Transverse colon (tissue), 4 donors: ENCODE measurements at regions of chr10 and their contacts with region 1.

Region 1: DNA sequence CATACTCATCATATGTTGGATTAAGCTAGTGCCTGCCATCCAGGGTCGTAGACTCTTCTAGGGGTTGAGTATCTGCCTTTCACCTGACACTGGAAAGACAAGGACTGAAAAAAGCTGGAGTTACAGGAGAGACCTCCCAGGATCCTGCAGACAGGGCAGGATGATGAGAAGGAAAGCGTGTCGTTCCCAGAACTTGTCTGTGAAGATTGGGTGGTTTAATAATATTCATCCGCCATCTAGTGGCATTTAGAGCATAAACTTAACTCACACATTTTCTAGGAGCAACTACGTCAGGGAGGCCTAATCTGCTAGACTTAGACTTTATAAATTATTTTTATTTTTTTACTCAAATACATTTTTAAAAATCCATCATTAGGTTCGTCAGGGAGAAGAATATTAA is 59.6 kb downstream of the ADRB1 start:
- DNase-seq: no peak
- H3K4me3 ChIP-seq: no peak overlapping the region
- H3K27ac ChIP-seq: no peak overlapping the region
- H3K4me1 ChIP-seq: peaks cover 0 to 15% (median 10%) of the 10 kb centered on the region in 4 donors
- H3K27me3 ChIP-seq: no peaks in the 10 kb centered on the region
- CTCF ChIP-seq: peak; percentile 46 to 74 (median 58)
- EP300 ChIP-seq: no peak
- POLR2A ChIP-seq: no peak

Region 2: GRCh38 chr10:113027574-113028455 is 1075.5 kb before region 1 on chr10:
- in situ Hi-C with region 1: no loop called
- intact Hi-C with region 1: no loop called
- DNase-seq: no peak
- H3K4me3 ChIP-seq: no peak overlapping the region
- H3K27ac ChIP-seq: peak overlapping the region in 3 of 4 donors; percentile 23 to 30 (median 29)
- H3K4me1 ChIP-seq: peaks cover 10 to 37% (median 32%) of the 10 kb centered on the region in 4 donors
- H3K27me3 ChIP-seq: no peaks in the 10 kb centered on the region
- CTCF ChIP-seq: no peak
- EP300 ChIP-seq: no peak
- POLR2A ChIP-seq: no peak

Region 3: DNA sequence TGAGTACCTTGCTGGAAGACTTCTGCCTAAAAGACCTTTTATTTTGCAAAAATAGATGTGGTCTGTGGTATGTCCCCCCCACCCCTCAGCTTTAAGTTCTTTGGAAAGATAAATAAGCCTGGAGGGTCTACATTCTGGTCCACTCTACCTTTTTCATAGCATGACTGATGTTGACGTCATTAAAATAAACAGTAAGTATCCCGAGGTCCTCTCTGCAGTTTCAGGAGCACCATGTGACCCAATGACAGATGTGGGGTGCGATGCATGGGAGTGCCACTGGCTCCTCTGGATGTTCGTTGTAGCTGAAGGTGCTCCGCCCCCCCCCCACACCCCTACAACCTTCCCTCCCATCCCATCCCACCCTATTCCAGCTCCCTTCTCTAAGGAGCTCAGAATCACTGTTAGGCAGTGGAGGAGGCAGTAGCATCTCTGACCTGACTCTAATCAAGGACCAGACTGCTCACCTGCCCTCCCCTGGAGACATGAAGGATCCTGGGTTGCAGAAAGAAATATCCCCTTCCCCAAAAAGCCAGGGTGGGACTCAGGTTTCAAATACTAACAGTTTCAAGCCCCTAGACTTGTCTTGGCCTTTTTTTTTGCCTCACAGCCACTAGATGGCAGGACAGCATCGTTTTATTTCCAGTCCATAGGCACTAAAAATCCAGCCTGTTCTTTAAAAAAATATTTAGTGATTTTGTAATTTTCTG is 398.5 kb before region 1 on chr10:
- in situ Hi-C with region 1: loop called (anchors 10 kb)
- intact Hi-C with region 1: no loop called
- DNase-seq: no peak
- H3K4me3 ChIP-seq: no peak overlapping the region
- H3K27ac ChIP-seq: no peak overlapping the region
- H3K4me1 ChIP-seq: peaks cover 0 to 19% (median 3%) of the 10 kb centered on the region in 4 donors
- H3K27me3 ChIP-seq: no peaks in the 10 kb centered on the region
- CTCF ChIP-seq: peak; percentile 62 to 68 (median 64)
- EP300 ChIP-seq: no peak
- POLR2A ChIP-seq: no peak

Region 4: DNA sequence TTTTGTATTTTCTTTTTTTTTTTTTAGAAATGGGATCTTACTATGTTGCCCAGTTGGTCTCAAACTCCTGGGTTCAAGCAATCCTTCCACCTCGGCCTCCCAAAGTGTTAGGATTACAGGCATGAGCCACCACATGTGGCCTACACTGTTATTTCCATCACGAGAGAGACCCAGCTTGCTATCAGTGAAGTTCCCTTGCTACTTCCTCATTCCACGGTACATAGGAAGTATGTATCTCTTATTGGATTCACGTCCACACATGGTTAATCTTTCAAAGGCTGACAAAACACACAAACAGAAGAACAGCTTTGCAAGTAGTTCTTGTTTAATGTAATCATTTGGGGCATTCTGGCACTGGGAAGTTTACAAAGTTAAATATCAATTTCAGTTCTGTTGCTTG is 300.3 kb before region 1 on chr10:
- in situ Hi-C with region 1: loop called (anchors 5 to 25 kb)
- intact Hi-C with region 1: loop called (anchors 5 kb)
- DNase-seq: no peak
- H3K4me3 ChIP-seq: no peak overlapping the region
- H3K27ac ChIP-seq: no peak overlapping the region
- H3K4me1 ChIP-seq: peaks cover 0 to 4% (median 0%) of the 10 kb centered on the region in 4 donors
- H3K27me3 ChIP-seq: no peaks in the 10 kb centered on the region
- CTCF ChIP-seq: no peak
- EP300 ChIP-seq: no peak
- POLR2A ChIP-seq: no peak

Region 5: DNA sequence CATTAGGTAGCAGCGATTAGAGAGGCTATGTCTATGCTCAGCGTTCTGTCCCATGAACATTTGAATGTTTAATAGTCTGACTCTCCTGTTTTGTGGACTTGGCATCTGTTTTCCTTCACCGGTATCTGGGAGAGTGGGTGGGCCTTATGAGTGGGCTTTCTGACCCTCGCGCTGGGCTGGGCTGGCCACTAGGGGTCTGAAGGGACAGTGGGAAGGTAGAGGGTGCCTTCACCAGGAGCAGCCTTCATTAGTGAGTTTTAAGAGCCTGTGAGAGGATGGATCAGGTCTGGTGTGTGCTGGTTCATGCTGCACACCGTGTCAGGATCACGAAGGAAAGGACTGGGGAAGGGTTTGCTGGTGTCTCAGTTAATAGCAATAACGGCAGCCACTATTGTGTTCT is 282.8 kb before region 1 on chr10:
- in situ Hi-C with region 1: loop called in 1 of 4 experiments (anchors 25 kb)
- intact Hi-C with region 1: no loop called
- DNase-seq: no peak
- H3K4me3 ChIP-seq: no peak overlapping the region
- H3K27ac ChIP-seq: no peak overlapping the region
- H3K4me1 ChIP-seq: no peaks in the 10 kb centered on the region
- H3K27me3 ChIP-seq: no peaks in the 10 kb centered on the region
- CTCF ChIP-seq: no peak
- EP300 ChIP-seq: no peak
- POLR2A ChIP-seq: no peak